HepG2 (cell line): ENCODE measurements at regions of chr17 and their contacts with region 1.

Region 1: GRCh38 chr17:1931759-1932579 is 93.2 kb downstream of the RTN4RL1 start:
- DNase-seq: peak; percentile 56
- ATAC-seq: peak; percentile 75
- H3K4me3 ChIP-seq: peak overlapping the region in 1 of 3 experiments; percentile 57; a peak in 1 of 6 replicates
- H3K27ac ChIP-seq: no peak overlapping the region
- H3K4me1 ChIP-seq: peaks cover 7% of the 10 kb centered on the region; the same call in 1 of the 2 replicates
- H3K27me3 ChIP-seq: peaks cover 23 to 66% of the 10 kb centered on the region in 2 experiments
- CTCF ChIP-seq: no peak; the same call in 1 of the 2 replicates
- EP300 ChIP-seq: no peak
- POLR2A ChIP-seq: no peak
- RAD21 ChIP-seq: no peak

Region 2: GRCh38 chr17:1947743-1948516 is 16.0 kb after region 1 on chr17:
- CTCF ChIA-PET with region 1: no interaction called
- POLR2A ChIA-PET with region 1: no interaction called
- in situ Hi-C with region 1: no loop called
- intact Hi-C with region 1: loop called (anchors 2 kb)
- DNase-seq: peak; percentile 30
- ATAC-seq: peak; percentile 74
- H3K4me3 ChIP-seq: peak overlapping the region; percentile 46 to 69 (median 52)
- H3K27ac ChIP-seq: no peak overlapping the region
- H3K4me1 ChIP-seq: peaks cover 30% of the 10 kb centered on the region
- H3K27me3 ChIP-seq: peaks cover 4 to 14% of the 10 kb centered on the region in 2 experiments; a peak in 4 of 5 replicates
- CTCF ChIP-seq: 0 out of 2 replicates have a peak, but pooled peaks have one; percentile 7
- EP300 ChIP-seq: no peak
- POLR2A ChIP-seq: no peak
- RAD21 ChIP-seq: no peak

Region 3: DNA sequence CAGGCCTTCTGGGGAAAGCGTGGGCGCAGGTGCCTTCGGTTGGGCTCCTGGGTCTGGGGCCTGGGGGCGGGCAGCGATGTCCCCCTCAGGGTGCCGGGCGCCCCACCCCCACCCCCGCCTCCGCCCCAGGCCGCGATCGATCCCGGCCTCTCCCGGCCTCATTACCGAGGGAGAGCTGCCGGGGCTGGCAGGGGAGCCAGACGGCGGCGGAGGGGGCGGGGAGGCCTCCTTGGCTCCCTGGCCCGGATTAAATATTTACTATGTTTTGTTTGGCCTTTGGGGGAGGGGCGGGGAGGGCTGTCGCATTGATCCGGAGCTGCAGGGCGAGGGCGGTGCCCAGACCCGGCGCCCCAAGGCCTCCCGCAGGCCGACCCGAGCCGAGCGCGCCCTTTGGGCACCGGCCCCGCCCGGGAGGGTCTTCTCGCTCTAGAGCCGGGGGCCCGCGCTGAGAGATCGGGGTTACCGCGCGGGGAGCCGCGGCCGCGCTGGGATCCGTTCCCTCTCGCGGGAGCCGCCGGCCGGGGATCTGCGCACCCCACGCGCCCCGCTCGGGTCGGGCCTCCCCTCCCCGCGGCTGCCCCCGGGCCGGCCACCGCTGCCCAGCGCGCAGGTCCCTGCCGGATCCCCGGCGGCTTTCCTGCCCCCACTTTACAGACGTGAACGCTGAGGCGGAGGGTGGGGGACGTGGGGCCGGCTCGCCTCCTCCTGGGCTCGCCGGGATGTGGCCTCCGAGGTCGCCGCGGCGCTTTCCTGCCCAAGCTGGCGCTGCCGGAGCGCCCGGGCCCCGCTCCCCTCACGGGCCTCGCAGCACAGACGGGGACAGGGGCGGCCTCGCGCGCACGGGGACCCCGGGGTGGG is 66.2 kb after region 1 on chr17:
- CTCF ChIA-PET with region 1: no interaction called
- POLR2A ChIA-PET with region 1: interaction called, 10 read pairs
- in situ Hi-C with region 1: no loop called
- intact Hi-C with region 1: no loop called
- DNase-seq: peak; percentile 77
- ATAC-seq: peak; percentile 70
- H3K4me3 ChIP-seq: peak overlapping the region; percentile 38 to 66 (median 60); a peak in 5 of 6 replicates
- H3K27ac ChIP-seq: peak overlapping the region; percentile 70
- H3K4me1 ChIP-seq: peaks cover 52% of the 10 kb centered on the region
- H3K27me3 ChIP-seq: peaks cover 0 to 6% of the 10 kb centered on the region in 2 experiments; a peak in 2 of 5 replicates
- CTCF ChIP-seq: no peak
- EP300 ChIP-seq: peak in 1 of 2 experiments; percentile 74; a peak in 2 of 4 replicates
- POLR2A ChIP-seq: no peak
- RAD21 ChIP-seq: peak; percentile 62